ENCODE measurements at regions of chr4 and their contacts with region 1.

Region 1: DNA sequence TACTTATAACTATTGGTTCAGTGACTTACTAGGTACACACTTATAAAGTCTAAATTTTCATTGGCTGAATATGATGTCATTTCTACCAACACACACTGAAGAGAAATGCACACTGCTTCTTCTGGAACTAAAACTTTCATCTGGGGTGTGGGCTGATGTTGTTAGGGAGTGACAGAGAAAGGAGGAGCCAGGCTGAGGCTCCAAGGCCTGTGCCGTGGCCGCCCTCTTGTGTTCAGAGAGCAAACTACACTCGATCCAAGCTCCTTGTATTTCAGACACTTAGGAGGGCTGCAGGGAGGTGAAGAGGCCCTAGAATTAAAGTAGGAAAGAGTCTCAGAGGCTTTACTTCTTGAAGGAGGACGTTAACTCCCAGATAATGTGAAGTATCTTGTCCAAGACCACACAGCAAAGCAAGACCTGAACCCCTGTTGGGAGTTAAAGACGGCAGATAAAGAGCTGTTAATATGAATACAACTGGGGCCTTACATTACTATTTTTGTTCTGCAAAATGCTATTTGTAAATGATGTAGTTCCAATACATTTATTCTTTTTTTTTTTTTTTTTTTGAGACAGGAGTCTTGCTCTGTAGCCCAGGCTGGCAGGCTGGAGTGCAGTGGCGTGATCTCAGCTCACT is 137.5 kb downstream of the AFAP1 start:
- DNase-seq: peak; percentile 51
- H3K4me3 ChIP-seq: no peak overlapping the region
- H3K27me3 ChIP-seq: no peaks in the 10 kb centered on the region
- CTCF ChIP-seq: peak; percentile 93

Region 2: DNA sequence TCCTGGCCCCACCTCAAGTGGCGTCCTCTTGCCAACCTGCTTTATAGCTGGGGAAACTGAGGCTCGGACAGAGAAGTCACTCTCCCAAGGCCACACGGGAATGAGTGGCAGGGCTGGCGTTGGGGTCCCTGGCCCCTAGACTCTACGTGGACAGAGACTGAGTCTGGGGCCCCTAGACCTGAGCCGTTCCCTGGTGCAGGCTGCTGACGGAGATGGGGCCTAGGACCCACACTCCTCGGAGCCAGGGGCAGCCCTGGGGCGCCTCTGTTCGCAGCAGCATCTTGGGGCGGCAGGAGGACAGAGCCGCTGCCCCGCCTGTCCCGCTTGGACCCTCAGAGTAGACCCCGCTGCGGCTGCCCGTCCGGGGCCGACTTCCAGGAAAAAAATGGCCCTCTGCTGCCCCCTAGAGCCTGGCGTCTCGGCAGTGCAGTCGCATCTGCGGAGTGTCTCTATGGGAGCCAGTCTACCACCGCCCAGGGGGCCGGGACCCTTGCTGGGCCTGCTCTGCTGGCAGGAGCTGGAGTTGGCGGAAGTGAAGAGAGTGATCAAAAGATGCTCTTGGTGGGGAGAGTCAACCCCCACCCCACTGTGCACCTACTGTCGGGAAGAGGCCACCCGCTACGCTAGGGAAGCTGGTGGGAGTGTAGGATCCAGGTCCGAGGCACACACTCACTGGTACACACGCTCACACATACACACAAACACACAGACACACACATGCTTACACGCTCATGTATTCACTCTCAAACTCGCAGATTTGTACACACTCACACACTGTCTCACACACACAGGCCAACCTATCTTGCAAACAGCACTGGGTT is 82.6 kb before region 1 on chr4:
- CTCF ChIA-PET with region 1: no interaction called
- POLR2A ChIA-PET with region 1: no interaction called
- DNase-seq: no peak
- H3K4me3 ChIP-seq: no peak overlapping the region
- H3K27me3 ChIP-seq: peaks cover 3% of the 10 kb centered on the region; the same call in 1 of the 2 replicates
- CTCF ChIP-seq: peak; percentile 87

Region 3: DNA sequence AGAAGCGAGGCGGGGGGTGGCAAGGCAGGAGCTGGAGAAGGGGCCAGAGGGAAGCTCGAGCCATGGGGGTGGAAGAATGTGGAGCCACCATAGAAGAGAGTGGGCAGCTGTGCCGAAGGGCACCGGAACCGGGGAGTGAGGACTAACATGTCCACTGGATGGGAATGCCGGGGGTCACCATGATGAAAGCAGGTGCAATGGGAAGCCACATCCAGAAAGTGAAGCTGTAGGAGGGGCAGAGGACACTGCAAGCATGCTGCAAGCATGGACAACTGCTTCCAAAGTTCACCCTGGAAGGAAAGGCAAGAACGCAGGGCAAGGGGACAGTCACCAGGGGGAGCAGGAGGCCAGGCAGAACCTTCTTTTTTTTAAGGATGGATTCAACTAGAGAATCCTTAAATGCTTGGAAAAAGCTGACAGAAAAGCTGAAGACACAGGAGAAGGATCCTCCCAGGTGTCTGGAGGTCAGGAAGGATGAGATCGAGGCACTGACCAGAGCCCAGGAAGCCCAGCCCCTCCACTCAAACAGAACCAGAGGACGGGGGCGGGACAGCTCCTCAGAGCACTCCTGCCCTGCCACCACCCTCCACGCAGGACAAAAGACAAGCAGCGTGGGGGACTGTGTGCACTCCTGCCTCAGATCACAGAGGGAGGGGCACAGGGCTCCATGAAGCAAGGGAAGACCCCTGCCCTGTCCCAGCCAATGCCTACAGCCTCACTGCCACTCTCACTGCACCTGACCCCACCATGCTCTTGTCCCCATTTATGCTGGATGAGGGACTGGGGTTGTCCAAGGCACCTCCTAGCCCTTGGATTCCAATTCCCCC is 31.8 kb before region 1 on chr4:
- CTCF ChIA-PET with region 1: interaction called, 23 read pairs
- POLR2A ChIA-PET with region 1: no interaction called
- DNase-seq: no peak
- H3K4me3 ChIP-seq: no peak overlapping the region
- H3K27me3 ChIP-seq: no peaks in the 10 kb centered on the region
- CTCF ChIP-seq: peak; percentile 68

Region 4: DNA sequence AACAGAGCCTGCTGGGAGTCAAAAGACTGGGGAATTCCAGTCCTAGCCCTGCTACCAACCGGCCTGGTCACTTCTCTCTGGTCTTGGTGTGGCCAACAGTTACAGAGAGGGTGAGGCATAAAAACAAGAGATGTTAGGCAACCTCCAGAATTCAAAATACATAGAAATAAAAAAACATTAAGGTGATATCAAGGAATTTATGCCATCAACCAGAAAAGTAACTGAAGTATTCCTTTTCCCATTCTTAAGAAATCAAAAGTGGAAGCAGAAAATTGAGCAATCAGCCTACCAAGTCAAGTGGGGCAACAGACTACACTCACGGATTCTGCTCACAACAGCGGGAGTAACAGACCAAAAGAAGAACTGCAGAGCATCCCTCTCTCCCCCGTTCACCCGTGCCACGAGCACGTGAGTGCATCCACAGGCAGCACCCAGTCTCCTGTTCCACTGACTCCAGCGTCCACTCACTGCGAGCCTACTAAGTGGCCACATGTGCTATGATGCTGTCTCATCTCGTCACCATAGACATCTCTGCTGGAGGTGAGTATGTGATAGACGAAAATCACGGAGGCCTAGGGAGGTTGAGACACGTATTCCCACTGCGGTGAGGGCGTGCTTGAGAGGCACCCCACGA is 108.2 kb after region 1 on chr4:
- CTCF ChIA-PET with region 1: interaction called, 11 read pairs
- POLR2A ChIA-PET with region 1: no interaction called
- DNase-seq: no peak
- H3K4me3 ChIP-seq: no peak overlapping the region
- H3K27me3 ChIP-seq: no peaks in the 10 kb centered on the region
- CTCF ChIP-seq: no peak

Region 5: GRCh38 chr4:7939377-7940108 is 137.3 kb after region 1 on chr4 and contains the start of gene AFAP1:
- CTCF ChIA-PET with region 1: interaction called, 18 read pairs
- POLR2A ChIA-PET with region 1: no interaction called
- DNase-seq: peak; percentile 29
- H3K4me3 ChIP-seq: peak within 1 kb of the TSS; percentile 59
- H3K27me3 ChIP-seq: no peaks in the 10 kb centered on the region
- CTCF ChIP-seq: no peak
- polyA plus RNA-seq, gene AFAP1: 28.9 and 48.5 TPM in 2 replicates

Measured in BJ (cell line).